ENCODE measurements at regions of chr19 and their contacts with region 1.

Region 1: DNA sequence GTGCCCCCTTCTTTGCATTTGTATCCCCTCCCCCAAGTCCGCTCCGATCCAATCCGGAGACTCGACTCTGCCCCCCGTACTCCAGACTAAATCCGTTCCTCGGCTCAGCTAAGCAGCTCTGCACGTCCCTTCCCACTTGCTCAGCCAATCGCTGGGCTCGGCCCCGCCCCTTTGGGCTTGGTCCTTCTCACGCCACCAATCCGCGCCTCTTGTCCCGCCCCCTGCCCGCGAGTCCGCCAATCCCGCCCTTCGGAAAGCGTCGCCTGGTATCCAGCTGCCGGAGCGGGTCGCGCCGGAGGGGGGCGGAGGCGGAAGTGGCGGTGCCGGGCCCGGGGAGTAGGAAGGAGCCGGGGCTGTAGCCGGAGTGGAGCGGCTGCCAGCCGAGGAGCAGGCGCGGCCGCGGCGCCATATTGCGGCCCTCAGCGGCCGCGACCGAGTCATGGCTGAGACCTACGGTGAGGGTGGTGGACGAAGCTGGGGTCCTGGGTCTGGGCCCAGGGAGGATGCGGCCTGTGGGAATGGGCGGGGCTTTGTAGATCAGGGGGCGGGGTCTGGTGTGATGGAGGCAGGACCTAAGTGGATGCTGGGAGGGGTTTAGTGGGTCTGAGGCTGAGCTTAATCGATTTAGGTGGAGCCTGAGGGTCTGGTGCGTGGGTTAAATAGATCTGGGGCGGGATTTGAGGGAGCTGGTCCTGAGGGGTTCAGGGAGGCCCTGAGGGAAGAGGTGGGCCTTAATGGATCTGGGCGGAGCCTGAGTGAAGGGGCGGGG is at the start of gene RAB4B:
- DNase-seq: peak; percentile 100
- ATAC-seq: peak; percentile 95 to 98 (median 97)
- H3K4me3 ChIP-seq: peak within 1 kb of the TSS; percentile 43 to 84 (median 74)
- H3K27ac ChIP-seq: peak within 1 kb of the TSS; percentile 89 to 100 (median 96)
- H3K4me1 ChIP-seq: peaks cover 7 to 25% (median 14%) of the 10 kb centered on the region in 9 donors
- H3K27me3 ChIP-seq: no peaks in the 10 kb centered on the region
- CTCF ChIP-seq: peak in 1 of 9 donors; percentile 22
- total RNA-seq, gene RAB4B: 11.0 to 25.2 (median 13.5) TPM

Region 2: DNA sequence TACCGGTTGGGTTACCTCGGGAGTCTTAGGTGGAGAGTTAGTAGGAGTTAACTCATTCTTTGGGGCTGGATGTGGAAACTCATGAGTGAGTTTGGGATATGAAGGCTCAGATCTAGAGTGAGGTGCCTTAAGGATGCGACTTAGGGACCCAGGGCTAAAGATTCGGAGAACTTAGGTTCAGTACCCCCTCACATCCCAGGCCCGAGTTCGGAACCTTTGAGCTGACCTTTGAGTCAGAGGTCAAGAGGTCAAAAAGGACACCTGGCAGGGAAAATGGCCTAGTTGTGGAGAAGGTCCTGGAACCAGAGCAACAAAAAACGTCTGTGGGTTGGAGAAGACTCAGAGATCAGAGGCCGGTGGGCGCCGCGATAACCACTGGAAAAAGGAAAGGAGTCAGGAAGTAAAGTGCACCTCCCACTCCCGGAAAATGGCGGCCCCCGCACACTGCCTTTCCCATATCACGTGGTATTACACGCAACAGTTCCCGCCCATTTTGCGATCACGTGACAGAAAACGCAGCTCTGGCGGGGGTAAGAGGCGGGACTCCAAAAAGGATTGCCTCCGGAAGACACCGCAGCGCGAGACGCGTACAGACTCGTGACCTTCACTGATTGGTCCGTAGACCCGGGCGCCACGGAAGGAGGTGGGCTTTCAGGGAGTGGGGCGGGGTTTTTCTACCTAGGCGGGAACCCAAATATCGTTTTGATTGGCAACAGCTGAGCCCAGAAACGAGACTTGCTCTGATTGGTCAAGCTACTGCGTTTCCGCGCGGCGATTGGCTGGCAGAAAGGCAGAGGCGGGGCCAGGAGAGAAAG is 27.9 kb before region 1 on chr19 and contains the start of gene ACTMAP:
- intact Hi-C with region 1: loop called in 1 of 10 experiments (anchors 2 kb)
- DNase-seq: peak; percentile 98 to 100
- ATAC-seq: peak; percentile 95 to 98 (median 97)
- H3K4me3 ChIP-seq: peak within 1 kb of the TSS; percentile 56 to 92 (median 79)
- H3K27ac ChIP-seq: peak within 1 kb of the TSS; percentile 92 to 99 (median 95)
- H3K4me1 ChIP-seq: peaks cover 15 to 66% (median 47%) of the 10 kb centered on the region in 9 donors
- H3K27me3 ChIP-seq: no peaks in the 10 kb centered on the region
- CTCF ChIP-seq: no peak
- total RNA-seq, gene ACTMAP: 5.3 to 11.4 (median 8.4) TPM

Region 3: GRCh38 chr19:40813182-40813958 is 35.2 kb after region 1 on chr19:
- intact Hi-C with region 1: no loop called
- DNase-seq: no peak
- ATAC-seq: no peak
- H3K4me3 ChIP-seq: no peak overlapping the region
- H3K27ac ChIP-seq: no peak overlapping the region
- H3K4me1 ChIP-seq: peaks cover 3 to 47% (median 34%) of the 10 kb centered on the region in 9 donors
- H3K27me3 ChIP-seq: no peaks in the 10 kb centered on the region
- CTCF ChIP-seq: no peak

Region 4: GRCh38 chr19:40831502-40832442 is 53.7 kb after region 1 on chr19:
- intact Hi-C with region 1: no loop called
- DNase-seq: no peak
- ATAC-seq: peak in 1 of 8 donors; percentile 42
- H3K4me3 ChIP-seq: no peak overlapping the region
- H3K27ac ChIP-seq: no peak overlapping the region
- H3K4me1 ChIP-seq: peaks cover 0 to 14% (median 0%) of the 10 kb centered on the region in 9 donors
- H3K27me3 ChIP-seq: no peaks in the 10 kb centered on the region
- CTCF ChIP-seq: no peak

Measured in heart right ventricle (tissue), 16 donors.